Psoas muscle (tissue), 8 donors: ENCODE measurements at regions of chr7 and their contacts with region 1.

Region 1: DNA sequence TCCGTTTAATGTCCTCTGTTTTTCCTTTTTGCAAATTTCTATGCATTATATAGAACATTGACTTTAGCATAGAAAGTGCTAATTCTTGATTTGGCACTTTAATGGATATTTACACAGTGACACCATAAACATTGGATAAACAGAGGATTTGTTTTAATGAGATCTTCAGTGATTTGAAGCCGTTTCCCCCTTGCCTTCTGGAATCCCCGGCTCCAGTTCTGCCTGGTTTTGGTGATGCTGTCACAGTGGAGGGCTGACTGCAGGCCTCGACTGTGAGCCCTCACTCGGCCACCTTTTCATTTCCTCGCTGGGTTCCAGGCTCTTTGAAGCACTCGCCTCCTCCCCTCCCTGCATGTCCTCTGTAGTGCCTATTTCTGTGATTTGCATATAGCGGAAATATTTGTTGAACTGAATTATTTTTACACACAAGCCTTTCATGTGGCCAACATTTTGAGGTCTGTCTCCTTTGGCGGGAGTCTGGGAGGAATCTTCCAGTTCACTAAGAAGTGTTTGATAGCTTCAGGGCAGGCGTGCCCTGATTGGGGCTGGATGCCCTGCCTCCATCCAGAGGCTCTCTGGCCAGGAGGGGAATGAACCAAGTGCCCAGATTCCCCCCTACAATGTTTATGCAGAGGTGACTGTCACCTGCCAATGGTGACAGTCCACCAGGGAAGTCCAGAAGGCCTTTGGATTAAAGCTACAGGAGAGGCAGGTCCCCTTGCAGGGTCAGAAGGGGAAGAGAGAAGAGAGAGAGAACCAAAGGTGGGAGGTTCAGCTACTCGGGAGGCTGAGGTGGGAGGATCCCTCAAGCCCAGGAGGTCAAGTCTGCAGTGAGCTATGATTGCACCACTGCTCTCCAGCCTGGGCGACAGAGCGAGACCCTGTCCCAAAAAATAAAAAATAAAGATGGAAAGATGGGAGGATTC is 67.5 kb downstream of the CUX1 start:
- DNase-seq: no peak
- ATAC-seq: no peak
- H3K4me3 ChIP-seq: no peak overlapping the region
- H3K27ac ChIP-seq: peak overlapping the region; percentile 94
- H3K4me1 ChIP-seq: peaks cover 68% of the 10 kb centered on the region
- H3K27me3 ChIP-seq: no peaks in the 10 kb centered on the region
- CTCF ChIP-seq: no peak

Region 2: DNA sequence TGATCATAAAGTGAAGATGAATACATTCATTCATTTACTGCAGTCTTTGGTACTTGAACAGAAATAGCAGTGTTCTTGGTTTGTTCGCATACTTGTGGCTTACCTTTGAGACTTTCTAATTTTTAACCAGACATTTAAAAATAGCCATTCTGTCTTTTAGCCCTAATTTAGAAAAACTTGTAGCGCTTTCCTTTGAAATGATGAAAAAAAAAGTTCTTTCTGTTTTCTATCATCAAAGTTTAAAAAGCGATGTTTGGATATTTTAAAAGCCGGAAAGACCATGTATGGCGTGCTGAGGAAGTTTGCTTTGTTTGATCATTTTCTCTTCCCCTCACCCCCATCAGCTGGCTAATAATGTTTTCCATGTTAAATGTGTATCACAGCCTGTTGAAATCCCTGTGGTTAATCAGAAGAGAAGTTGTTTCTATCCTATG is 48.8 kb after region 1 on chr7:
- intact Hi-C with region 1: loop called in 1 of 2 experiments (anchors 5 kb)
- DNase-seq: no peak
- ATAC-seq: no peak
- H3K4me3 ChIP-seq: no peak overlapping the region
- H3K27ac ChIP-seq: peak overlapping the region; percentile 90
- H3K4me1 ChIP-seq: peaks cover 41% of the 10 kb centered on the region
- H3K27me3 ChIP-seq: no peaks in the 10 kb centered on the region
- CTCF ChIP-seq: no peak

Region 3: DNA sequence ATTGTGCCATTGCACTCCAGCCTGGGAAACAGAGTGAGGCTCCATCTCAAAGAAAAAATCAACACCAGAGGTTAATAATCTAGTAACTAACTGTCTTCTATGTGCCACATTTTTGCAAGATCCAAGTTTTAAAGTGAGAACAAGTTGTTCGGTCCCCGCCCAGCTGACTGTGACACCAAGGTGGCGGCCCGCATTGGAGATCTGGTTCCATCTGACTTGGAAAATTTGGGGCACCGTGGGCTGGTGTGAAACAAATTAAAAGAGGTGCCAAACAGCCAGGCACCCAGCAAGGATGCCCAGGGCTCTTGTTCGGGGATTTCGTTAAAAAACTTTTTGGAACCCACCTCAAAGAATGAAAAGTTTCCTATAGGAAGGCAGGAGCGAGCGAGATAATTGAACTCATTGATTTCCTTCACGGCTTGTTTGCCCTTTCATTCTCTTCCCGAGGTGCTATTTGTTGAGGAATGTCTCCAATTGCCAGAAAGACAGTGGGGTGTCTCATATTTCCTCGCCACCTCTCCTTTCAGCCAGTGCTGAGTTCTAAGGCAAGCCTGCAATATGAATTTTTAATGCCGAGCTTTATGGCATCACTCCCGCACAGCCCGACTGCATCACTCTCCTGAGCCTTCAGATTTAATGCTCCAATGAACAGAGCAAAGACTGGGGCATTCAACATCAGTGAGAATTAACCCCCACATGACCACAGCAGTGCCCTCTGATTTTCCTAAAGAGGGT is 244.9 kb after region 1 on chr7:
- intact Hi-C with region 1: no loop called
- DNase-seq: no peak
- ATAC-seq: no peak
- H3K4me3 ChIP-seq: no peak overlapping the region
- H3K27ac ChIP-seq: no peak overlapping the region
- H3K4me1 ChIP-seq: no peaks in the 10 kb centered on the region
- H3K27me3 ChIP-seq: no peaks in the 10 kb centered on the region
- CTCF ChIP-seq: no peak